Activated naive CD4-positive, alpha-beta T cell treated with anti-CD3 and anti-CD28 coated beads for 36 hours (primary cell): ENCODE measurements at regions of chr10 and their contacts with region 1.

Region 1: GRCh38 chr10:112471878-112472487 is 25.0 kb downstream of the VTI1A start:
- DNase-seq: no peak
- H3K4me3 Mint-ChIP-seq: no peak overlapping the region
- H3K27ac Mint-ChIP-seq: no peak overlapping the region
- H3K4me1 Mint-ChIP-seq: peaks cover 7% of the 10 kb centered on the region
- H3K27me3 Mint-ChIP-seq: no peaks in the 10 kb centered on the region

Region 2: GRCh38 chr10:112140110-112140970 is 331.6 kb before region 1 on chr10:
- CTCF ChIA-PET with region 1: interaction called, 9 read pairs
- intact Hi-C with region 1: loop called (anchors 2 kb)
- DNase-seq: peak; percentile 87
- H3K4me3 Mint-ChIP-seq: no peak overlapping the region
- H3K27ac Mint-ChIP-seq: peak overlapping the region; percentile 61
- H3K4me1 Mint-ChIP-seq: no peaks in the 10 kb centered on the region
- H3K27me3 Mint-ChIP-seq: peaks cover 4% of the 10 kb centered on the region

Region 3: GRCh38 chr10:112434988-112435619 is 36.9 kb before region 1 on chr10:
- CTCF ChIA-PET with region 1: interaction called, 28 read pairs
- intact Hi-C with region 1: loop called (anchors 5 kb)
- DNase-seq: no peak
- H3K4me3 Mint-ChIP-seq: no peak overlapping the region
- H3K27ac Mint-ChIP-seq: no peak overlapping the region
- H3K4me1 Mint-ChIP-seq: peaks cover 2% of the 10 kb centered on the region
- H3K27me3 Mint-ChIP-seq: no peaks in the 10 kb centered on the region

Region 4: GRCh38 chr10:112487964-112488363 is 16.0 kb after region 1 on chr10:
- CTCF ChIA-PET with region 1: interaction called, 16 read pairs
- intact Hi-C with region 1: no loop called
- DNase-seq: no peak
- H3K4me3 Mint-ChIP-seq: no peak overlapping the region
- H3K27ac Mint-ChIP-seq: no peak overlapping the region
- H3K4me1 Mint-ChIP-seq: peaks cover 9% of the 10 kb centered on the region
- H3K27me3 Mint-ChIP-seq: no peaks in the 10 kb centered on the region

Region 5: GRCh38 chr10:112631501-112632410 is 159.8 kb after region 1 on chr10:
- CTCF ChIA-PET with region 1: no interaction called
- intact Hi-C with region 1: no loop called
- DNase-seq: no peak
- H3K4me3 Mint-ChIP-seq: no peak overlapping the region
- H3K27ac Mint-ChIP-seq: no peak overlapping the region
- H3K4me1 Mint-ChIP-seq: no peaks in the 10 kb centered on the region
- H3K27me3 Mint-ChIP-seq: no peaks in the 10 kb centered on the region

Region 6: GRCh38 chr10:113385021-113385999 is 913.3 kb after region 1 on chr10:
- CTCF ChIA-PET with region 1: interaction called, 4 read pairs
- intact Hi-C with region 1: loop called (anchors 1 kb)
- DNase-seq: peak; percentile 72
- H3K4me3 Mint-ChIP-seq: no peak overlapping the region
- H3K27ac Mint-ChIP-seq: no peak overlapping the region
- H3K4me1 Mint-ChIP-seq: peaks cover 23% of the 10 kb centered on the region
- H3K27me3 Mint-ChIP-seq: peaks cover 2% of the 10 kb centered on the region

Region 7: DNA sequence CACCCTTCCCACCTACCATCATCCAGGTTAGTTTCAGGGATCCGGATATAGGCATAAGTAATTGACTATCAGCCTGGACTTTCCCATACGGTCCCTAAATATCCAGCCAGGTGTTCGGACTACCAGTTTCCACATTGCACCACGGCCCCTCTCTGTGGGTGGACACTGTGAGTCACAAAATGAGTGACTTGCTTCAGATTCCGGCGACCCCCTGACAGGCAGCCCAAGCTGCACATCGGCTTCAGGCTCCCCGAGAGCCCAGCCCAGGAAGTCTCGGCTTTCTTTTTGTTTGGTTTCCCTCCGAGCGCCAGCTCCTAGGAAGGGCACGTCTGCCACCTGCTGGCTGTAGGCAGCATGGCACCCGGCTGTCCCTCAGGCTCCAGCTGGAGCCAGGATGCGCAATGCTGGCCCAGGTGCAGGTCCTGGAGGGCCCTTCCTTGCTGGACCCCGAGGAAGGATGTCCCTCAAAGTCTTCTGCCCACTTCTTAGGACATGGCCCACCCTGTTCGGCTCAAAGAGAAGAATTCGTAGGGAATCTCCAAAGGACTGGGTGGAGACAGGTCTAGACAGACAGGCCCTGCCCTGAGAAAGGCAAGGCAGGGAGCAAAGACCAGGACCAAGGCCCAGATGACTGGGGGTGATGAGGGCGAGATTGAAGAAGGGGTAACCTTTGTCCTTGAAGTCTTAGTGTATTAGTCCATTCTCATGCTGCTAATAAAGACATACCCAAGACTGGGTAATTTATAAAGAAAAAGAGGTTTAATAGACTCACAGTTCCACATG is 1091.5 kb after region 1 on chr10:
- CTCF ChIA-PET with region 1: interaction called, 7 read pairs
- intact Hi-C with region 1: loop called (anchors 1 kb)
- DNase-seq: peak; percentile 81
- H3K4me3 Mint-ChIP-seq: peak overlapping the region; percentile 57
- H3K27ac Mint-ChIP-seq: no peak overlapping the region
- H3K4me1 Mint-ChIP-seq: peaks cover 2% of the 10 kb centered on the region
- H3K27me3 Mint-ChIP-seq: no peaks in the 10 kb centered on the region